HepG2 (cell line): ENCODE measurements at regions of chr17 and their contacts with region 1.

Region 1: DNA sequence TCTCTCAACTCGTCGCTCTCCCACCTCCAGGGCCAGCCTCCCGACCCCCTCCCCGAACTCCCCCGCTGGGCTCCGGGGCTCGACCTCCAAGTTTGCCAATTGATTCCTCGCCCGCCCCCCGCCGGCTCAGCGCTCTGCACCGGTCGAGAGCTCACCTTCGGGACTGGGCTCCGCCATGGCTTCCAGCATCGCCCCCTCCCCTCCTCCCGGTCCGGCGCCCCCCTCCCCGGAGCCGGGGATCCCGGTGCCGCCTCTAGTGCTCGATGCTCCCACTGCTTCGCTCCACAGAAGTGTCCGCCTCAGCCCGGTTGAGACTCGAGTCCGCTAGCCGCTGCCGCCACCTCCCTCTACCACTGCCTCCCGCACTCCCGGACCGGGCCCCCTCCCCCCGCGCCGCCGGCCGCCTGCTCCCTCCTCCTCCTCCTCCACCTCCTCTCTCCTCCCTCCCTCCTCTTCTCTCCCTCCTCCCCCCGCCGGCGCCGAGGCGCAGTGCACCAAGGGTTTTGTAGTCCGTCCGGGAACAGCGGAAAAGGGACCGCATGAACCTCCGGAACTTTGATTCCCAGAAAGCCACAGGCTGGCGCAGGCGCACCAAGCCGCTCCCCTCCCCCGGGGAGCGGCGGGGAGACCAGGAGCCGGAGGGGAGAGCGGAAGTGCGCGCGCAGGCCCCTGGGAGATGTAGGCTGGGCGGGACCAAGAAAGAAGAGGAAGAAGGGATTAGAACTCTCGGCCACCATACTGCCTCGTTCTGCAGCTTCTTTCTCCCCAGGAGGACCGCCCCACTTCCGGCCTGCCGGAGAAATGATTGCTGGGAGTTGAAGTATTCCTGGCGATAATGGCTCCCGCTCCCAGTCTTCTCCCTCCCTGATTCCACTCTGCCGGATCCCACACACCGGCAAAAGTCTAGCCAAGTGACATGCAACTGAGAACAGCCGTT is at the start of gene PHF23:
- DNase-seq: peak; percentile 97
- ATAC-seq: peak; percentile 66
- H3K4me3 ChIP-seq: peak within 1 kb of the TSS; percentile 97 to 98 (median 98)
- H3K27ac ChIP-seq: peak within 1 kb of the TSS; percentile 88
- H3K4me1 ChIP-seq: peaks cover 54% of the 10 kb centered on the region
- H3K27me3 ChIP-seq: no peaks in the 10 kb centered on the region; a peak in 1 of 5 replicates
- CTCF ChIP-seq: no peak
- EP300 ChIP-seq: 0 out of 4 replicates have a peak, but pooled peaks of 1 of the 2 experiments have one; percentile 28
- POLR2A ChIP-seq: peak; percentile 51 to 69; a peak in 3 of 4 replicates
- RAD21 ChIP-seq: 0 out of 2 replicates have a peak, but pooled peaks have one; percentile 9
- total RNA-seq, gene PHF23: 33.2 and 37.5 TPM in 2 replicates

Region 2: GRCh38 chr17:7219812-7220581 is 19.4 kb before region 1 on chr17 and contains the starts of genes ACADVL and DLG4:
- CTCF ChIA-PET with region 1: no interaction called
- POLR2A ChIA-PET with region 1: interaction called, 140 read pairs
- in situ Hi-C with region 1: no loop called
- intact Hi-C with region 1: no loop called
- DNase-seq: peak; percentile 75
- ATAC-seq: peak; percentile 85
- H3K4me3 ChIP-seq: peak within 1 kb of the TSS; percentile 73 to 93 (median 90)
- H3K27ac ChIP-seq: peak within 1 kb of the TSS; percentile 96
- H3K4me1 ChIP-seq: peaks cover 62% of the 10 kb centered on the region
- H3K27me3 ChIP-seq: peaks cover 0 to 4% of the 10 kb centered on the region in 2 experiments; a peak in 2 of 5 replicates
- CTCF ChIP-seq: 0 out of 2 replicates have a peak, but pooled peaks have one; percentile 8
- EP300 ChIP-seq: no peak
- POLR2A ChIP-seq: peak; percentile 88 to 94
- RAD21 ChIP-seq: peak; percentile 46; the same call in 1 of the 2 replicates
- total RNA-seq, gene ACADVL: 106 and 219 TPM in 2 replicates
- total RNA-seq, gene DLG4: 0.25 and 0.71 TPM in 2 replicates

Region 3: DNA sequence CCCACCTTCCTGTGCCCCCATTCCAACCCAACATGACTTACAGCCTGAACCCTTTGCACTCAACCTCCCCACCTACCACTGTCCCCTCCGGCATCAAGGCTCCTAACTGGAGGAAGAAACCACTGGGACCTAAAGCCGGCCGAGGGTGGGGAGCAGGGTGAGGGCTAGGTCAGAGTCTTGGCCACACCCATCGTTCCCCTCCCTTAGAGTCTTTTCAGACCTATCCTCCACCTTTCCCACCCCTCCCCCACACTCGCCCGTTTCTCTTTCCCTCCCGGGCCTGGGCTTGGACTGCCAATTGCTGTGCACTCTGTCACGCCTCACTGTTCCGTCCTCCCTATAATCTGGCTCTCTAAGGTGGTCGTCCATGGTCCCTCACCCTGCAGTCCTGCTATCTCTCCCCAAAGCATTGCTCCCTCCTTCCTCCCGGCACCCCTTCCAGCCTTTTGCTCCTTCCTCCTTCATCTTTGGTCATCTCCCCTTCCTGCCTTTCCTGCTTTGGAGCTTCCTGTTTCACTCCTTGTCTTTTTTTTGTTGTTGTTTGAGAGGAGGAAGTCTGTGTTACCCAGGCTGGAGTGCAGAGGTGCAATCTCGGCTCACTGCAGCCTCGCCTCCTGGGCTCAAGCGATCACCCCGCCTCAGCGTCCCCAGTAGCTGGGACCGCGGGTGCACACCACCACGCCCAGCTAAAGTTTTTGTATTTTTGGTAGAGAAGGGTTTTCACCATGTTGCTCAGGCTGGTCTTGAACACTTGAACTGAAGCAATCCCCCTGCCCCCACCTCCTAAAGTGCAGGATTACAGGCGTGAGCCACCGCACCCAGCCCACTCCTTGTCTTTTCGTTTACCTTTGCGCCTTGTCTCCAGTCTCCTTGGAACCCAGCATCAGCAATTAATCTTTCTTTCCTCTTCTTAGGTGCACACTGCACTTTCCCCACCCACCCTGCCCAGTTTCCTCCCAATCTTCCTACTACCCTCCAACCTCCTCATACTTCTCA is 24.0 kb after region 1 on chr17:
- CTCF ChIA-PET with region 1: no interaction called
- POLR2A ChIA-PET with region 1: interaction called, 35 read pairs
- in situ Hi-C with region 1: no loop called
- intact Hi-C with region 1: no loop called
- DNase-seq: no peak
- ATAC-seq: no peak
- H3K4me3 ChIP-seq: no peak overlapping the region
- H3K27ac ChIP-seq: peak overlapping the region; percentile 64
- H3K4me1 ChIP-seq: peaks cover 61% of the 10 kb centered on the region
- H3K27me3 ChIP-seq: no peaks in the 10 kb centered on the region
- CTCF ChIP-seq: no peak
- EP300 ChIP-seq: no peak
- POLR2A ChIP-seq: no peak
- RAD21 ChIP-seq: no peak

Region 4: DNA sequence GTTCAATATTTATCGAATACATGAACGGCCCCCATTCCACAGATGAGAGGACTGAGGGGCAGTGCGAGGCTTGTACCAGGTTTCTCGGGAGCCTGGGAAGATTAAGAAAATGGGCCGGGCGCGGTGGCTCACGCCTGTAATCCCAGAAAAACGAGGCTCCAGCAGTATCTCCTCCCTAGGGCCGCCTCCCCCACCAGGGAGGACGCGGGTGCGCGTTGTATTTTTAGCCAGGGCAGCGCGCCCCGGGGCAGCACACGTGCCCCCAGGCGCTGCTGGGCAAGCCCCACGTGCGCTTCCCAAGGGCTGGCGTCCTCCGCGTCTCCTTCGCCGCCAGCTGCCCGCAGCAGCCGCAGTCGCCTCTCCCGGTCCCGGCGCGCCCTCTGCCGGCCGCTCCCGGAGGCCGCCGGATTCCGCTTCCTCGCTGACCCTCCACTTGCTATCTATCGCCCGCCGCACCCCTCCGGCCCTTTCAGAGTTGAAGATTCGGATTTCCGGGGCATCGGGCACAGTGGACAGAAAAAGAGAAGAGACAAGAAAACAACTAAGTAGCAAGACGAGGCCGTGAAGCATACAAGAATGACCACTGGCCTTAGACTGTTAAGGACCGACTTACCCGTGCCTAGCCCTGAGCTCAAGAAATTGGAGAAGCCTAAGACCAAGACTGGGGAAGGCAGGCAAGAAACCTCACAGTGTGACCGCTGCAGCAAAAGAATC is 57.0 kb after region 1 on chr17:
- CTCF ChIA-PET with region 1: interaction called, 11 read pairs
- POLR2A ChIA-PET with region 1: interaction called, 7 read pairs
- in situ Hi-C with region 1: no loop called
- intact Hi-C with region 1: no loop called
- DNase-seq: peak; percentile 56
- ATAC-seq: peak; percentile 63
- H3K4me3 ChIP-seq: peak overlapping the region in 1 of 3 experiments; percentile 50; a peak in 2 of 6 replicates
- H3K27ac ChIP-seq: no peak overlapping the region
- H3K4me1 ChIP-seq: peaks cover 41% of the 10 kb centered on the region
- H3K27me3 ChIP-seq: peaks cover 2 to 11% of the 10 kb centered on the region in 2 experiments; a peak in 2 of 5 replicates
- CTCF ChIP-seq: peak; percentile 93
- EP300 ChIP-seq: no peak
- POLR2A ChIP-seq: no peak
- RAD21 ChIP-seq: peak; percentile 99